Heart left ventricle (tissue), 16 donors: ENCODE measurements at regions of chrX and their contacts with region 1.

Region 1: GRCh38 chrX:70196961-70197805 is 19.9 kb downstream of the DGAT2L6 start:
- DNase-seq: peak in 2 of 5 donors; percentile 14 to 18
- ATAC-seq: peak in 2 of 4 donors; percentile 36 to 50
- H3K4me3 ChIP-seq: no peak overlapping the region
- H3K27ac ChIP-seq: no peak overlapping the region
- H3K4me1 ChIP-seq: no peaks in the 10 kb centered on the region
- H3K27me3 ChIP-seq: peaks cover 0 to 24% (median 0%) of the 10 kb centered on the region in 9 donors
- CTCF ChIP-seq: peak; percentile 42 to 69 (median 52)
- POLR2A ChIP-seq: no peak

Region 2: DNA sequence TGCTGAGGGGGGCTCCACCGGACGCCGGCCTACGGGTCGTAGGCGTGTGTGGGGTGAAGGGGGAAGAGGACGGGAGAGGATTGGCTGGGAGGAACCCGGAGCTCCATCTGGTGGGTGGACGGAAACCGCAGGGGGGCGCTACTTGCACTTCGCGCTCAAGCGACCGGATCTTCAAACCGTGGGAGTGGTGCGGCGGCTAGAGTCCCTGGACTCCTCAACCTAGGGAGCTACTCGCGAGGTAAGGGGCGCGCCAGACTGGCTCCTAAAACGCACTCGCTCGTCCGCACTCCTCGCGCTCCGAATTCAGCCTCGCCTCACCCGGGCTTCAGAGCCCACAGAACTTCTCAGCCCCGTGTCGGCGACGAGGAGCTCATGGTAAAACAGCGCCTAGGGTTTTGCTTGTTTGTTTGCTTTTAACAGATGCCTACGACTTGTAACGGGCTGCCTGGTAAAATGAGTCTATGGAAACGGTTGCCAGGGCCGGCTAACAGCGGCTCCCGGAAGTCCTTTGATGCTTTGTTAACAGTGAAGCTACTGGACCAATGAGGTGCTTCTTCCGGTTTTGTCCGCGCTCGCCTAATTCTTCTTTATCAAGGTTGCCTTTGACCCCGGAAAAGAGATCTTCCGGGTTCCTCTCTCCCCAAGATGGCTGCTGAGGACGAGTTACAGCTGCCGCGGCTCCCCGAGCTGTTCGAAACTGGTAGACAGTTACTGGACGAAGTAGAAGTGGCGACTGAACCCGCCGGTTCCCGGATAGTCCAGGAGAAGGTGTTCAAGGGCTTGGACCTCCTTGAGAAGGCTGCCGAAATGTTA is 63.7 kb before region 1 on chrX and contains the start of gene IGBP1:
- intact Hi-C with region 1: no loop called
- DNase-seq: peak; percentile 77 to 86 (median 84)
- ATAC-seq: peak; percentile 92 to 97 (median 93)
- H3K4me3 ChIP-seq: peak within 1 kb of the TSS; percentile 49 to 90 (median 77)
- H3K27ac ChIP-seq: peak within 1 kb of the TSS; percentile 55 to 91 (median 80)
- H3K4me1 ChIP-seq: peaks cover 0 to 18% (median 5%) of the 10 kb centered on the region in 12 donors
- H3K27me3 ChIP-seq: no peaks in the 10 kb centered on the region
- CTCF ChIP-seq: peak; percentile 41 to 76 (median 57)
- POLR2A ChIP-seq: no peak
- total RNA-seq, gene IGBP1: 36.4 to 52.7 (median 45.5) TPM

Region 3: DNA sequence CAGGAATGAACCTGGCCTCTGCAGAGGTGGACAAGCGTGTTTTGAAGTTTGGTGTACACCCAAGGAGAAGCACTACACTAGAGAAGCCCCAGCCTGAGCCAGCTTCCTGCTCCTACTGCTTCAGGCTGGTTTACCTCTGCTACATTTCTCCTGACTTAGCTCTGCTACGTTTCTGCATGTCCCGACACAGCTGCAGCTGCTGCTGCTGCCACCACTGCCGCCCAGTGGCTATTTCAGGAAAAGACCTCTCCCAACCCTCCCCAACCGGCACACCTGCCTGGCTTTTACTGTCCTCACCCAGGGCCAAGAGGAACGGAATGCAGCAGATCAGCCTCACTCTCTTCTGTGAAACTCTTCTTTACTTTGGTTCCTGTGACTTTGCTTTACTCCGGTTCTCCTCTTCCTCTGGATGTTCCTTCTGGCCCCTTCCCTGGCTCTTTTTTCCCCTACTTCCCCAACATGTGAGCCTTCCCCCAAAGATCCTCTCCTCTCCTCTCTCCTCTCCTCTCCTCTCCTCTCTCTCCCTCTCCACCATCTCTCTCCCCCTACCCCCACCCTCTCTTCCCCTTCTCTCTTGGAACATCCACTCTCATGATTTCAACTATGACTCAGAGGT is 65.9 kb after region 1 on chrX:
- intact Hi-C with region 1: loop called in 2 of 10 experiments (anchors 10 kb)
- DNase-seq: peak in 2 of 5 donors; percentile 9 to 29
- ATAC-seq: peak in 2 of 4 donors; percentile 58 to 65
- H3K4me3 ChIP-seq: no peak overlapping the region
- H3K27ac ChIP-seq: no peak overlapping the region
- H3K4me1 ChIP-seq: no peaks in the 10 kb centered on the region
- H3K27me3 ChIP-seq: peaks cover 0 to 9% (median 0%) of the 10 kb centered on the region in 9 donors
- CTCF ChIP-seq: peak; percentile 9 to 52 (median 30)
- POLR2A ChIP-seq: no peak

Region 4: DNA sequence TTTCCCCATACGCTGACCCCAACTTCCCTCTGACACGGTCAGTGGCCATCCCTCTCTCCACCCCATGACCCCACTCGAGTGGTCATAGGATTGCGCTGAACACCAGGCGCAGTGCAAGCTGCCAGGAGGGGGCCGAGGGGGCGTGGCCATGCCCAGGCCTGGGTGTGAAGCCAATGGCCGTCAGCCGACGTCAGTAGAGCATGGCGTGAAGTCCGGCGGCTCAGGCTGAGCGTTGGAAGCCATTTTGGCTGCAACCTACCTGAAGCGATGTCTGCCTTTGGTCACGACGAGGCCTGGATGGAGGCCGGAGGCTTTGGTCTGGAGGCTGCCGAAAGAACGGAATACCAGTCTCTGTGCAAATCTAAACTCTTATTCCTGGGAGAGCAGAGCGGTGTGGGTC is 84.8 kb after region 1 on chrX and contains the start of gene RAB41:
- intact Hi-C with region 1: no loop called
- DNase-seq: no peak
- ATAC-seq: no peak
- H3K4me3 ChIP-seq: no peak within 1 kb of the TSS
- H3K27ac ChIP-seq: no peak within 1 kb of the TSS
- H3K4me1 ChIP-seq: no peaks in the 10 kb centered on the region
- H3K27me3 ChIP-seq: no peaks in the 10 kb centered on the region
- CTCF ChIP-seq: no peak
- POLR2A ChIP-seq: no peak
- total RNA-seq, gene RAB41: not detected

Region 5: GRCh38 chrX:70433848-70434351 is 236.7 kb after region 1 on chrX:
- intact Hi-C with region 1: loop called in 4 of 10 experiments (anchors 2 to 10 kb)
- DNase-seq: peak; percentile 66 to 84 (median 71)
- ATAC-seq: peak; percentile 53 to 80 (median 73)
- H3K4me3 ChIP-seq: peak overlapping the region; percentile 35 to 94 (median 68)
- H3K27ac ChIP-seq: peak overlapping the region; percentile 38 to 97 (median 83)
- H3K4me1 ChIP-seq: peaks cover 0 to 20% (median 3%) of the 10 kb centered on the region in 12 donors
- H3K27me3 ChIP-seq: peaks cover 0 to 18% (median 0%) of the 10 kb centered on the region in 9 donors
- CTCF ChIP-seq: peak; percentile 56 to 78 (median 63)
- POLR2A ChIP-seq: no peak